ENCODE measurements at regions of chr9 and their contacts with region 1.

Region 1: GRCh38 chr9:98357921-98358535 is 102.6 kb upstream of the TBC1D2 start:
- DNase-seq: no peak
- ATAC-seq: no peak
- H3K4me3 ChIP-seq: no peak overlapping the region
- H3K27ac ChIP-seq: no peak overlapping the region
- H3K4me1 ChIP-seq: no peaks in the 10 kb centered on the region
- H3K27me3 ChIP-seq: peaks cover 0 to 23% (median 0%) of the 10 kb centered on the region in 9 donors
- CTCF ChIP-seq: no peak
- POLR2A ChIP-seq: no peak

Region 2: GRCh38 chr9:98306384-98307160 is 51.5 kb before region 1 on chr9:
- intact Hi-C with region 1: loop called in 1 of 10 experiments (anchors 5 kb)
- DNase-seq: peak in 2 of 5 donors; percentile 12 to 39
- ATAC-seq: peak in 3 of 4 donors; percentile 58 to 85 (median 68)
- H3K4me3 ChIP-seq: no peak overlapping the region
- H3K27ac ChIP-seq: peak overlapping the region in 5 of 12 donors; percentile 7 to 52 (median 37)
- H3K4me1 ChIP-seq: peaks cover 0 to 21% (median 0%) of the 10 kb centered on the region in 12 donors
- H3K27me3 ChIP-seq: no peaks in the 10 kb centered on the region
- CTCF ChIP-seq: no peak
- POLR2A ChIP-seq: no peak

Region 3: GRCh38 chr9:98597236-98597771 is 239.3 kb after region 1 on chr9:
- intact Hi-C with region 1: no loop called
- DNase-seq: no peak
- ATAC-seq: no peak
- H3K4me3 ChIP-seq: no peak overlapping the region
- H3K27ac ChIP-seq: no peak overlapping the region
- H3K4me1 ChIP-seq: peaks cover 0 to under 1% (median 0%) of the 10 kb centered on the region in 12 donors
- H3K27me3 ChIP-seq: no peaks in the 10 kb centered on the region
- CTCF ChIP-seq: no peak
- POLR2A ChIP-seq: no peak